ENCODE measurements at regions of chr14 and their contacts with region 1.

Region 1: GRCh38 chr14:58244556-58245387 is at the start of gene PSMA3:
- DNase-seq: peak; percentile 97 to 98 (median 97)
- H3K4me3 ChIP-seq: peak within 1 kb of the TSS; percentile 60
- H3K27ac ChIP-seq: peak within 1 kb of the TSS; percentile 58 to 91
- H3K4me1 ChIP-seq: peaks cover 6% of the 10 kb centered on the region
- H3K27me3 ChIP-seq: no peaks in the 10 kb centered on the region
- CTCF ChIP-seq: peak in 1 of 3 donors; percentile 11
- EP300 ChIP-seq: no peak
- POLR2A ChIP-seq: peak; percentile 88
- total RNA-seq, gene PSMA3: 68.5 to 136 (median 93.4) TPM

Region 2: DNA sequence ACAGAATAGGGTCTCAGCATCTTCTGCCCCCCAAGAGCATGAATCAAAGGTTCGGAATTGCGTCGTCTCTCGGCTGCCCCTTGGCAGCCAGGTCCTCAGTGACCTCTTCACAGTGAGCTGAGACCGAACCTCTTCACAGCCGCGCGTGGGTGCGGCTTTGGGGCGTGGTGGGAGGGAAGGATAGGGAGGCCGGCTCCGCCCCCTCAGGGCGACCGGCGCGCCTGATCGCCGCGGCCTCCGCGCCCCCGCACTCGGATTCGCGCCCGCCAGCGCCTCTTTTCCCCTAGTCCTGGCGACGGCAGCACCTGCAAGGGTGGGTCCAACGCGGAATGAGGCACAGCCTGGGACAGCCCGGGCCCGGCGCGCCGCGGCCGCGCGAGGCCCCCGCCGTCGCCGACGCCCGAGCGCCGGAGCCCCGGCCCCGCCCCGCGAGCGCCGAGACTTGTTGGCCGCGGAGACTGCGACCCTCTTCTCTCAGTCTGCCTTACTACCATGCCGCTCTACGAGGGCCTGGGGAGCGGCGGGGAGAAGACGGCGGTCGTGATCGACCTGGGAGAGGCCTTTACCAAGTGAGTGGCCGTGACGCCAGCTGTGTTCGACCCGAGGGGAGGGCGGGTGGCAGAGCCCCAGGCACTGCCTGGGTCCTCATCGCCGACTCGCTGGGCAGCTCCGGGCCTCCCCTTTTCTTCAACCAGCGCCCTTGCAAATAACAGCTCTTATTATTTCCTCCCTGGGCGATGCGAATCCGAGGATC is 44.9 kb before region 1 on chr14 and contains the start of gene ACTR10:
- intact Hi-C with region 1: loop called in 2 of 4 experiments (anchors 2 kb)
- DNase-seq: peak; percentile 82 to 93 (median 89)
- H3K4me3 ChIP-seq: peak within 1 kb of the TSS; percentile 91
- H3K27ac ChIP-seq: peak within 1 kb of the TSS; percentile 91 to 96
- H3K4me1 ChIP-seq: peaks cover 2% of the 10 kb centered on the region
- H3K27me3 ChIP-seq: no peaks in the 10 kb centered on the region
- CTCF ChIP-seq: no peak
- EP300 ChIP-seq: no peak
- POLR2A ChIP-seq: peak; percentile 32
- total RNA-seq, gene ACTR10: 54.1 to 87.3 (median 71.2) TPM

Region 3: DNA sequence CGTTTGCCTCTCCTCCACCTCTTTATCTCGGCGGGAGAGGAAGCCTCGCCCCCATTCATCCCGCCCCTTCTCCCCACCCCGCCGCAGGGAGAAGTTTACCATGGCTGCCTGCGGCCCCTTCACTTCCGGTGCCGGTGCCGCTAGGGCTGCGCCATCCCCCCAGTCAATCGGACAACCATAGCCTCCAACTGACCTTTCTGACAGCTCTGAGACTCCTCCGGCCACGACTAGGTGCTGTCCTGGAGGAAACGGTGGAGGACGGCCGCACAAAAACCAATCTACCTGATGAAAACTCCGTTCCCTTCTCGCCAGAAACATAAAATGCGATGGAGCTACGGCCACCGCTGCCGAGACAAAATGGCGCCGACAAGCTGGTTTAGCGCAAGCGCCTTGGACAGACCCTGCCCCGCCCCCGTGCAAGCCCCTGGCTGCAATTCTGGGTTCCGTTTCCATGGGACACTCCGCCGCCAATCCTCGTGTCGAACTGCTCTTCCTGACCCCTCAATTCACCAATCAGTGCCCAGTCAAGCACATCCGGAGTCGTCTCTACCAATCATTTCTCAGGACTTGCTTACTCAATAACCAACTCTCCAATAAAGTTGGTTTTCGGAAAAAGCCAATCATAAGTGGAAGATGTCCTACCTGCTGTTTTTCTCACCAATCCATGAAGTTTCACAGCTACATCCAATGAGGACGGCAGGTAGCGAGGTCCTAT is 53.1 kb after region 1 on chr14:
- intact Hi-C with region 1: loop called in 2 of 4 experiments (anchors 2 to 5 kb)
- DNase-seq: peak; percentile 98 to 99 (median 98)
- H3K4me3 ChIP-seq: peak overlapping the region; percentile 97
- H3K27ac ChIP-seq: peak overlapping the region; percentile 88 to 97
- H3K4me1 ChIP-seq: peaks cover 7% of the 10 kb centered on the region
- H3K27me3 ChIP-seq: no peaks in the 10 kb centered on the region
- CTCF ChIP-seq: no peak
- EP300 ChIP-seq: no peak
- POLR2A ChIP-seq: peak; percentile 81

Region 4: GRCh38 chr14:58427281-58428117 is 182.7 kb after region 1 on chr14 and contains the starts of genes KIAA0586 and TIMM9:
- intact Hi-C with region 1: loop called in 1 of 4 experiments (anchors 5 kb)
- DNase-seq: peak; percentile 94 to 97 (median 96)
- H3K4me3 ChIP-seq: peak within 1 kb of the TSS; percentile 67
- H3K27ac ChIP-seq: peak within 1 kb of the TSS; percentile 72 to 81
- H3K4me1 ChIP-seq: peaks cover 1% of the 10 kb centered on the region
- H3K27me3 ChIP-seq: no peaks in the 10 kb centered on the region
- CTCF ChIP-seq: peak in 1 of 3 donors; percentile 31
- EP300 ChIP-seq: peak; percentile 10
- POLR2A ChIP-seq: peak; percentile 84
- total RNA-seq, gene KIAA0586: 8.0 to 19.1 (median 14.3) TPM
- total RNA-seq, gene TIMM9: 32.8 to 64.0 (median 41.5) TPM

Region 5: GRCh38 chr14:58626431-58626831 is 381.7 kb after region 1 on chr14:
- intact Hi-C with region 1: no loop called
- DNase-seq: no peak
- H3K4me3 ChIP-seq: no peak overlapping the region
- H3K27ac ChIP-seq: no peak overlapping the region
- H3K4me1 ChIP-seq: no peaks in the 10 kb centered on the region
- H3K27me3 ChIP-seq: no peaks in the 10 kb centered on the region
- CTCF ChIP-seq: no peak
- EP300 ChIP-seq: no peak
- POLR2A ChIP-seq: no peak

Measured in ovary (tissue), 10 donors.